AG04449 (cell line): ENCODE measurements at regions of chr11 and their contacts with region 1.

Region 1: GRCh38 chr11:34366522-34366921 is 8.7 kb upstream of the ABTB2 start:
- DNase-seq: no peak
- H3K4me3 ChIP-seq: no peak overlapping the region
- CTCF ChIP-seq: no peak

Region 2: GRCh38 chr11:34344768-34345539 is 21.6 kb before region 1 on chr11:
- CTCF ChIA-PET with region 1: no interaction called
- POLR2A ChIA-PET with region 1: no interaction called
- DNase-seq: no peak
- H3K4me3 ChIP-seq: no peak overlapping the region
- CTCF ChIP-seq: no peak

Region 3: GRCh38 chr11:34427186-34427805 is 60.8 kb after region 1 on chr11:
- CTCF ChIA-PET with region 1: no interaction called
- POLR2A ChIA-PET with region 1: no interaction called
- DNase-seq: no peak
- H3K4me3 ChIP-seq: no peak overlapping the region
- CTCF ChIP-seq: no peak

Region 4: GRCh38 chr11:34468209-34468841 is 101.8 kb after region 1 on chr11:
- CTCF ChIA-PET with region 1: interaction called, 20 read pairs
- POLR2A ChIA-PET with region 1: no interaction called
- DNase-seq: no peak
- H3K4me3 ChIP-seq: no peak overlapping the region
- CTCF ChIP-seq: peak; percentile 43